Activated T-helper 1 cell treated with anti-CD3 and anti-CD28 coated beads, Interleukin-12 subunit alpha, Interleukin-12 subunit beta, Interleukin-2, Interleukin-4 antibody, amounts not matched to agents 30 ng/mL and 10 ng/mL and 1 ng/mL, durations not matched to agents 14 hours and 24 hours and 36 hours (primary cell): ENCODE measurements at regions of chr13 and their contacts with region 1.

Region 1: GRCh38 chr13:91313103-91313502 is 34.4 kb upstream of the MIR17HG start:
- DNase-seq: peak; percentile 17
- H3K4me3 Mint-ChIP-seq: peak overlapping the region; percentile 56
- H3K27ac Mint-ChIP-seq: no peak overlapping the region
- H3K4me1 Mint-ChIP-seq: peaks cover 31% of the 10 kb centered on the region
- H3K27me3 Mint-ChIP-seq: peaks cover 3% of the 10 kb centered on the region

Region 2: GRCh38 chr13:91331047-91331915 is 18.2 kb after region 1 on chr13:
- intact Hi-C with region 1: loop called (anchors 2 kb)
- DNase-seq: no peak
- H3K4me3 Mint-ChIP-seq: peak overlapping the region; percentile 26
- H3K27ac Mint-ChIP-seq: no peak overlapping the region
- H3K4me1 Mint-ChIP-seq: peaks cover 19% of the 10 kb centered on the region
- H3K27me3 Mint-ChIP-seq: no peaks in the 10 kb centered on the region

Region 3: DNA sequence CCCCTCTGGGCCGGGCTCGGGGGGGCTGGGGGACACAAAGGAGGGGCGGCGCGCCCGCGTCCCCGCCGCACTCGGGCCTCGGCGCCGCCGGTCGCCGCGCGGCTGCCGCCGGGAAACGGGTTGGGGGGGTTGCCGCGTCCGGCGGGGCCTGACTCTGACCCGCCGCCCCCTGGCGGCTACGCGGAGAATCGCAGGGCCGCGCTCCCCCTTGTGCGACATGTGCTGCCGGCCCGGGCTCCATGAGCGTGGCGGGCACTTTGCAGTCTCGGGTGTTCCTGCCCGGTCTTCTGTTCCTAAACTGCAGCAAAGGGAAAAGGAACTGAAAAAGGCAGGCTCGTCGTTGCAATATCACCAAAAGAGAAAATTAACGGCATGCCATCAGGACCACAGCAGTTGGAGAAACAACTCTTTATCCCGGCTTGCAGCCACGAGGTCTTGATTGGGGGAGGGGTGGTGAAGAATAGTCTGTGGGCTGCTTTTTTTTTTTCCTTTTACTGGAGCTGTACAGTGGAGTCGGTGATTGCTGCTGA is 35.9 kb after region 1 on chr13:
- intact Hi-C with region 1: loop called (anchors 1 kb)
- DNase-seq: peak; percentile 91
- H3K4me3 Mint-ChIP-seq: peak overlapping the region; percentile 99
- H3K27ac Mint-ChIP-seq: peak overlapping the region; percentile 98
- H3K4me1 Mint-ChIP-seq: peaks cover 53% of the 10 kb centered on the region
- H3K27me3 Mint-ChIP-seq: no peaks in the 10 kb centered on the region

Region 4: DNA sequence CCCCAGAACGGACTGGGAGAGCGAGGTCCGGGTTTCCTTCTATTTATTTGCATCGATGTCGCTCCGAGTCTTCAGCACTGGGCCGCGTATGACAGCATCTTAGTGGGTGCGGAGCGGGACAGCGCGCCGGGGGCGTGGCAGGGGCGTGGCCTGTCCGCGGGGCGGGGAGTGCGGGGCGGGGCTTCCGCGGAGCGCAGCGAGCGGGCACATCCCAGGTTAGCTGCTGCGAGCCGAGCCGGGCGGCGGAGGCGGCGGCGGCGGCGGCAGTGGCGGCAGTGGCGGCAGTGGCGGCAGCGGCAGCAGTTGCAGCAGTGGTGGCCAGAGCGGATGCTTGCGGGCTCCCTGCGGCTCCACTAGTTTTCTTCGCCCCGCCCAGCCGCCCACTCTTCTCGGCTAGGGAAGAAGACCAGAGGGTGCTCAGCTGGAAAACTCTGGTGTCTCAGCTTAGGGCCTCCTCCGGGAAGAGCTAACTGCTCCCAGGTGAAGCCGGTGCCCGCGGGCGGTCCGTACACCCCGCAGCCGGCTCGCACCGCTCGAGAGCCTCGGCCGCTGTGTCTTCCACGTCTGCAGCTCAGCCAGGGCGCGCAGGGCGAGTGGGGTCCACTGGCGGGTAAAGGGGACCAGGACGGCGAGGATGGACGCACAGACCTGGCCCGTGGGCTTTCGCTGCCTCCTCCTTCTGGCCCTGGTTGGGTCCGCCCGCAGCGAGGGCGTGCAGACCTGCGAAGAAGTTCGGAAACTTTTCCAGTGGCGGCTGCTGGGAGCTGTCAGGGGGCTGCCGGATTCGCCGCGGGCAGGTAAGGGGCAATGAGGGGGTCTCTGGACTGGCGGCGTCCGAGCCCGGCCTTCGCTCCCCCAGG is 85.5 kb after region 1 on chr13 and contains the start of gene GPC5:
- intact Hi-C with region 1: loop called (anchors 1 kb)
- DNase-seq: peak; percentile 79
- H3K4me3 Mint-ChIP-seq: peak within 1 kb of the TSS; percentile 76
- H3K27ac Mint-ChIP-seq: no peak within 1 kb of the TSS
- H3K4me1 Mint-ChIP-seq: peaks cover 15% of the 10 kb centered on the region
- H3K27me3 Mint-ChIP-seq: peaks cover 64% of the 10 kb centered on the region
- total RNA-seq, gene GPC5: 0.22 TPM in 1 of 2 replicates, not detected in the other

Region 5: DNA sequence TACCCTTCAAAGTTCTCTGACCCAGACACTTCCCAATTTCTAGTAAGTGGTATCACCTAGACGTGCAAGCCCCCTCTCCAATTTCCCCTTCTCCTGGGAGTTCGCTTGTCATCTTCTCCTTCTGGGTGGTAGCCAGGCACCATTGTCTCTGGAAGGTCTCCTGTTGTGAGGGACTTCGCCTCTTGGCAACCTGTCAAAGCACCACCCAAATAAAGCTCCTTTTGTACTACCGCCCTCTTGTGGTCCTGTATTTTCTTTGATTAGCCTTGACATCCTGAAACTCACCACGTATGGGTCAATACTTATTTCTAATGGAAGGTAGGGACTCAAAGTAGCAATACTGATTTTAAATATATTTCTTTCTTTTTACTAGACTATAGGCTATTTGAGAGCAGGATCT is 93.5 kb after region 1 on chr13:
- intact Hi-C with region 1: loop called (anchors 1 kb)
- DNase-seq: no peak
- H3K4me3 Mint-ChIP-seq: no peak overlapping the region
- H3K27ac Mint-ChIP-seq: no peak overlapping the region
- H3K4me1 Mint-ChIP-seq: no peaks in the 10 kb centered on the region
- H3K27me3 Mint-ChIP-seq: peaks cover 39% of the 10 kb centered on the region

Region 6: GRCh38 chr13:91722267-91722884 is 409.3 kb after region 1 on chr13:
- intact Hi-C with region 1: loop called (anchors 2 kb)
- DNase-seq: no peak
- H3K4me3 Mint-ChIP-seq: no peak overlapping the region
- H3K27ac Mint-ChIP-seq: no peak overlapping the region
- H3K4me1 Mint-ChIP-seq: no peaks in the 10 kb centered on the region
- H3K27me3 Mint-ChIP-seq: no peaks in the 10 kb centered on the region